Right ventricle myocardium superior (tissue), 1 donor: ENCODE measurements at regions of chr2 and their contacts with region 1.

Region 1: GRCh38 chr2:182077451-182078142 is 91.9 kb downstream of the PPP1R1C start:
- DNase-seq: no peak
- ATAC-seq: peak; percentile 94

Region 2: DNA sequence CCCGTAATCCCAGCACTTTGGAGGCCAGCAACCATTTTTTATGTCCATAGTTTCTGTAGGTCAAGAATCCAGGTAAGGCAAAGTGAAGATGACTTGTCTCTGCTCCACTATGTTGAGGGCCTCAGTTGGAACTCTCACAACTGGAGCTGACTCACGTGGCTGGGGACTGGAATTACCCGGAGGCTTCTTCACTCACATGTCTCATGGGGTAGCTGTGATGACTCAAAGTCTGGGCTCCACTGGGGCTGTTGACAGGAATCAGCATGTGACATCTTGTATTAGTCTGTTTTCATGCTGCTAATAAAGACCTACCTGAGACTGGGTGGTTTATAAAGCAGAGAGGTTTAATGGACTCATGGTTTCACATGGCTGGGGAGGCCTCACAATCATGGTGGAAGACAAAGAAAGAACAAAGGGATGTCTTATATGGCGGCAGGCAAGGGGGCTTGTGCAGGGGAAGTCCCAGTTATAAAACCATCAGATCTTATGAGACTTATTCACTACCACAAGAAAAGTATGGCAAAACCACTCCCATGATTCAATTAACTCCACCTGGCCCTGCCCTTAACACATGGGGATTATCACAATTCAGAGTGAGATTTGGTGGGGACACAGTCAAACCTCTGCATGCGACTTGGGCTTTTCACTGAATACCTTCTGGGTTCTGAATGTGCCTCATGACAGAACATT is 99.8 kb before region 1 on chr2:
- intact Hi-C with region 1: loop called (anchors 10 kb)
- DNase-seq: no peak
- ATAC-seq: no peak

Region 3: GRCh38 chr2:182144777-182145165 is 67.2 kb after region 1 on chr2:
- intact Hi-C with region 1: no loop called
- DNase-seq: peak; percentile 62
- ATAC-seq: peak; percentile 94